Colonic mucosa (tissue), 4 donors: ENCODE measurements at regions of chr1 and their contacts with region 1.

Region 1: DNA sequence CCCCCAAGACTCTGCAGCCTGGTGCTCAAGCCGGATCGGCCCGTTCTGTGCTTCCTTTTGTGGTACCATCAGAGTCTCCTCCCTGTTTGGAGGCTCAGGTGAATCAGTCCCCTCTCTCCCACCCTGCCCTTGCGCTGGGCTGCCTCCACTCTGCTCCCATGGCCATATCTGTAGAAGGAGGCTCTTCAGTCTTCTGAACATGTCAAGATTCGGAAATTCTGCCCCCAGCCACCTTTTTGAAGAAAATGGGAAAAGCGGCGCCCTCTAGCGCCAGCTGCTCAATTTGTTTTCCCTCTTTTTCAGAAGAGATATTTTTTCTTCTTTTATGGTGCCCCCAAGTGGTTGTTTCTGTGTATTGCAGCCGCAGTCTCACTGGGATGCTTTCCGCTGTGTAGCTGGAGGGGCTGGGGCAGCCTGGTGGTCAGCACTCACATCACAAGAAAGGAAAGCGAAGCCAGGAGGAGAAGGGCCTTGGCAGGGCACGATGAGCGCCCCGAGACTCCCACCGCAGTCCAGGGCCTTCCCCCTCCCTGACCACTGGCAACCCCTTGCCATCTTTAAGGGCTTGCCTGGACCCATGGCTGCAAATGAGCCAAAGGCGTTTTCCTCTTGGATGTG is 58.4 kb upstream of the CACNA1E start:
- DNase-seq: peak; percentile 80
- H3K4me3 ChIP-seq: no peak overlapping the region
- H3K27ac ChIP-seq: no peak overlapping the region
- H3K4me1 ChIP-seq: no peaks in the 10 kb centered on the region
- H3K27me3 ChIP-seq: no peaks in the 10 kb centered on the region
- CTCF ChIP-seq: peak; percentile 97

Region 2: DNA sequence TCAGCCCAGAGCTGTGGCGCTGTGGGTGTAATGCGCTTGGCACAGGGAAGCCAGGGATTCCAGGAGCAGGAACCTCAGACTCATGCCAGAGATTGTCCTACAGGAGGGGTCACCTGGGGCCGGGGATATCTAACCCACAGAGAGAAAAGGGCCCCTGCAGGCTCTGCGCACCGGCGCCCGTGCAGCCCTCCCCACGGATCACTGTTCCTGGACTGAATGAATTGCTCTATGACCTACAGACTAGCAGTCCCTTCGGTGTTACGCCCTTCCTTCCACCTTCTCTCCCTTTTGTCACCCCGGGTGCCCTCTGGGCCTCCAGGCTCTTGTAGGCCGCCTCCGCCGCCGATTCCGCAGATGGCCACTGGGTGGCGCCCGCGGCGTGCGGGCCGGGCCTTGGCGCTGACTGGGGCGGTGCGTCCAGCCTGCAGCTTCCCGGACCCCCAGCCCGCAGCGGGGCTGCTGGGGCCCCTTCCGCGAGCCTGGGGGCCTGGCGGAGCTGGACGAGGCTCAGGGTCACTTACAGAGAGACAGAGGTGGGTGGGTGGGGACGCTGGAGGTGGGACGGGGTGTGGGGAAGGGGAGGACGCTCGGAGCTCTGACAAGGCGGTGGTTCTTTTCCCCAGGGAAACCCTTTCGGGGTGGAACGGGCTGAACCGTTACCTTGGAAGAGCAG is 235.1 kb before region 1 on chr1:
- intact Hi-C with region 1: loop called (anchors 2 kb)
- DNase-seq: peak; percentile 47
- H3K4me3 ChIP-seq: no peak overlapping the region
- H3K27ac ChIP-seq: no peak overlapping the region
- H3K4me1 ChIP-seq: no peaks in the 10 kb centered on the region
- H3K27me3 ChIP-seq: no peaks in the 10 kb centered on the region
- CTCF ChIP-seq: peak; percentile 96

Region 3: GRCh38 chr1:181206513-181206912 is 218.4 kb before region 1 on chr1:
- intact Hi-C with region 1: loop called (anchors 5 kb)
- DNase-seq: no peak
- H3K4me3 ChIP-seq: no peak overlapping the region
- H3K27ac ChIP-seq: no peak overlapping the region
- H3K4me1 ChIP-seq: no peaks in the 10 kb centered on the region
- H3K27me3 ChIP-seq: no peaks in the 10 kb centered on the region
- CTCF ChIP-seq: no peak